Lower leg skin (tissue), 4 donors: ENCODE measurements at regions of chr3 and their contacts with region 1.

Region 1: DNA sequence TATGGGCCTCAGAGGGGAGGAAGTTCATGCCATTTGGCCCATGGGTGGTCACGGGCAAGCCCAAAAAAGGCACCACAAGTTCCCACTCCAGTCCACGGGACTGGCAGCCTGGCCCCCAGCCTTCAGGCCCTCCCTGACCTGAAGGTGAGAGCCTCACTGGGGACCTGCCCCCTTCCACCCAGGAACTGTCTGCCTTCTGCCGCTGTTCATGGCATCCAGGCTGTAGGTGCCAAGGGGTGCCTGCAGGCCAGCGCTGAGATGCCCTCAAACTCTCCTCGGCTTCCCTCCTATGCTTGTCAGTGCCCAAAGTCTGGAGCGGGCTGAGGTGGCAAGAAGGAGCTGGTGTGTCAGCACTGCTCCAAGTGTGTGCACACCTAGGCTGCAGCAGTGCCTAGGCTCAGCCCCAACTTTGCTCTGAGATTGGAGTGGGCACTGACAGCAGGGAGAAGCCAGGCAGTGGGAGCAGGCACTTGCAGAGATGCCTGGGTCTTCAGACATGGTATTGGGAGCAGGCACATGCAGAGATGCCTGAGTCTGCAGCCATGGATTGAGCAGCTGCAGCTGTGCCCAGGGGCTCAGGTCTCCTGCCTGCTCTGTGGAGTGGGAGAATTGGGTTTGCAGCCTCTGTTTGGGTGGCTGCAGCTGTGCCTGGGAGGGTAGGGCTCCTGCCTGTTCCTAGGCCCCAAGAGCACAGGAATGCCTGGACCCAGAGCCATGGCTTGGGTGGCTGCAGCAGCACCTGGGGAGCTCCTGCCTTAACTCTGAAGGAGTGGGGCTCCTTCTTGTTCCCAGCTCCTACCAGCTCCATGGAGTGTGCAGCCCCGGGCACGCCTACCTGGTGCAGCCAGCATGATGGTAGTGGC is 44.0 kb upstream of the PRR23C start:
- DNase-seq: no peak
- H3K4me3 ChIP-seq: no peak overlapping the region
- CTCF ChIP-seq: no peak
- POLR2A ChIP-seq: no peak

Region 2: GRCh38 chr3:137789236-137789635 is 1299.5 kb before region 1 on chr3:
- intact Hi-C with region 1: loop called (anchors 10 kb)
- DNase-seq: no peak
- H3K4me3 ChIP-seq: no peak overlapping the region
- CTCF ChIP-seq: no peak
- POLR2A ChIP-seq: no peak

Region 3: DNA sequence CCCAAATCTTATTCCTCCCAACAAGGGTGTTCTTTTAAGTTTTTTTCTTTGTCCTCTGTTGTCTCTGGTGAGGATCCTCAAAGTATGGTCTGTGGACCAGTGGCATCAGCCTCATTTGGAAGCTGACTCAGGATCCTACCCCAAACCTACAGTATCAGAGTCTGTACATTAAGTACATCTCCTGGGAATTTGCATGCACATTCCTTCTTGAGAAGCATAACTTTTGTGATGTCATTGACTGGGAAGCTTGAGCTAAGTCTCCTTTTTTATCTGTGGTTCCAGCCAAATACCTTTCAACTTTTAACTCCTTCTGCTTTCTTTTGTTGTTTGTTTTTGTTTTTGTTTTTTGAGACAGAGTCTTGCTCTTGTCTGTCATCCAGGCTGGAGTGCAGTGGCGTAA is 861.0 kb before region 1 on chr3:
- intact Hi-C with region 1: no loop called
- DNase-seq: no peak
- H3K4me3 ChIP-seq: no peak overlapping the region
- CTCF ChIP-seq: no peak
- POLR2A ChIP-seq: no peak

Region 4: GRCh38 chr3:139101396-139101795 is 12.7 kb after region 1 on chr3:
- intact Hi-C with region 1: no loop called
- DNase-seq: peak in 1 of 2 donors; percentile 68
- H3K4me3 ChIP-seq: no peak overlapping the region
- CTCF ChIP-seq: no peak
- POLR2A ChIP-seq: no peak